Activated T-helper 2 cell treated with anti-CD3 and anti-CD28 coated beads, Interferon-gamma antibody, Interleukin-2, Interleukin-4, amounts not matched to agents 10 μg/mL and 5 μg/mL and 100 μg/mL, durations not matched to agents 14 hours and 24 hours and 36 hours (primary cell): ENCODE measurements at regions of chr22 and their contacts with region 1.

Region 1: DNA sequence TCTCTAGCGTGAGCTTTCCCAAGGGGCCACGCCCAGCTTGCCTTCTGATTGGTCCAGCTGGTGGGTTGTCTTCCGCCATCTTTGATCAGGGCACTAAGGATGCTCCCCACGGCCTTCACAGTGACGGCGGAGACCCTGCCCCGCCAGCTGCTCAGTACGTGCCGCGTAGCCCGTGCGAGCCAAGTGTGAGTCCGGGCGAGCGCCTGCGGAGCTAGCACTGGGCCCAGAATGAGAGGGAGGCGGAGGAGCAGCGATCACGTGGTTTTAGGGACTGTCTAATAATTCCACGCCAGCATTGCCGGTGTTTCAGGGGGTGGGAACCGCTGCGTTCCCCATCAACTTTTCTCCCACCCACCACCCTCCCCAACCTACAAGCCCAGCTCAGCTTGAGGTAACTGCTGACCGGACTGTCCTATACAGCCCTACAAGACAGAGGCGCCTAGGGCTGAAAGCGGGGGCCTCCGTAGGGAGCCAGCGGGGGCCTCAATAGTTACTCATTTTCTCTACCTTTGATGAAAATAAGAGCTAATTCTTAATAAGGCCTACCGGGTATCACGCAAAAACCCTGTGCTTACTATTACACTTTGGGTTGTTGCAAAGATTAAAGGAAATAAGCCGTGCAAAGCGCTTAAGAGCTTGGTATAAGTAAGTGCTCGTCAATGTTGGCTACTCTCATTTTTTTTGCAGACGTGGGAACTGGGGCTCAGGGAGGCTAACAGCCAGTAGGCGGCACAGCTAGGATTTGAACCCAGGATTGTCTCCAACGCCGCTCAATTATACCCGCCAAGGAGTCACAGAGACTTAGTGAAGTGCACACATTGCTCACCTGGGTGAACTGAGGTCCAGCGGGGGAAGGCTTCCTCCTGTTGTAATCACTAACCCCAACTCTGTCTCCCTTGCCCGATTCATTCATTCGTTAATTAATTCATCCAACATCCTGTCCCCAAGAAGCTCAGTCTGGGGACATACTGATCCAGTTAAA is 1.3 kb upstream of the MTFP1 start:
- DNase-seq: peak; percentile 98
- H3K4me3 Mint-ChIP-seq: peak overlapping the region; percentile 95
- H3K27ac Mint-ChIP-seq: peak overlapping the region; percentile 99
- H3K4me1 Mint-ChIP-seq: peaks cover 57% of the 10 kb centered on the region
- H3K27me3 Mint-ChIP-seq: no peaks in the 10 kb centered on the region

Region 2: GRCh38 chr22:29837780-29838598 is 586.3 kb before region 1 on chr22 and contains the start of gene ASCC2:
- intact Hi-C with region 1: loop called (anchors 10 kb)
- DNase-seq: peak; percentile 99
- H3K4me3 Mint-ChIP-seq: peak within 1 kb of the TSS; percentile 91
- H3K27ac Mint-ChIP-seq: peak within 1 kb of the TSS; percentile 84
- H3K4me1 Mint-ChIP-seq: peaks cover 26% of the 10 kb centered on the region
- H3K27me3 Mint-ChIP-seq: no peaks in the 10 kb centered on the region
- total RNA-seq, gene ASCC2: 69.8 and 74.9 TPM in 2 replicates

Region 3: GRCh38 chr22:30289134-30289979 is 134.9 kb before region 1 on chr22 and contains the start of gene CASTOR1:
- intact Hi-C with region 1: loop called (anchors 1 kb)
- DNase-seq: peak; percentile 92
- H3K4me3 Mint-ChIP-seq: peak within 1 kb of the TSS; percentile 87
- H3K27ac Mint-ChIP-seq: peak within 1 kb of the TSS; percentile 80
- H3K4me1 Mint-ChIP-seq: peaks cover 35% of the 10 kb centered on the region
- H3K27me3 Mint-ChIP-seq: no peaks in the 10 kb centered on the region
- total RNA-seq, gene CASTOR1: 11.1 TPM in 2 replicates

Region 4: GRCh38 chr22:30314915-30315314 is 109.4 kb before region 1 on chr22:
- intact Hi-C with region 1: no loop called
- DNase-seq: no peak
- H3K4me3 Mint-ChIP-seq: no peak overlapping the region
- H3K27ac Mint-ChIP-seq: peak overlapping the region; percentile 75
- H3K4me1 Mint-ChIP-seq: peaks cover 90% of the 10 kb centered on the region
- H3K27me3 Mint-ChIP-seq: no peaks in the 10 kb centered on the region

Region 5: GRCh38 chr22:30356449-30357235 is 67.6 kb before region 1 on chr22 and contains the starts of genes CCDC157 and SF3A1:
- intact Hi-C with region 1: loop called (anchors 2 kb)
- DNase-seq: peak; percentile 86
- H3K4me3 Mint-ChIP-seq: peak within 1 kb of the TSS; percentile 91
- H3K27ac Mint-ChIP-seq: peak within 1 kb of the TSS; percentile 89
- H3K4me1 Mint-ChIP-seq: peaks cover 34% of the 10 kb centered on the region
- H3K27me3 Mint-ChIP-seq: peaks cover 2% of the 10 kb centered on the region
- total RNA-seq, gene CCDC157: 3.2 and 4.3 TPM in 2 replicates
- total RNA-seq, gene SF3A1: 287 and 325 TPM in 2 replicates

Region 6: DNA sequence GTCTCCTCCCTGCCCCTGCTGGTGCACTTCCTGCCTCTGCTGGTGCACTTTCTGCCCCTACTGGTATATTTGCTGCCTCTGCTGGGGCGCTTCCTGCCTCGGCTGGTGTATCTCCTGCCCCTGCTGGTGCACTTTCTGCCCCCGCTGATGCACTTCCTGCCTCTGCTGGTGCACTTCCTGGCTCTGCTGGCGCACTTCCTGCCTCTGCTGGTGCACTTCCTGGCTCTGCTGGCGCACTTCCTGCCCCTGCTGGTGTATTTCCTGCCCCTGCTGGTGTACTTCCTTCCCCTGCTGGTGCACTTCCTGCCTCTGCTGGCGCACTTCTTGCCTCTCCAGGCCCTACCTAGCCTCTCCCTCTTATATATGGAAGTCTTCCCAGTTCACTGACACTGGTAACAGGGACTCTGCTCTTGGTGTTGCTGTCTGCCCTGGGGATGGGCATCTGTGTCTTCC is 11.4 kb after region 1 on chr22:
- intact Hi-C with region 1: loop called (anchors 1 kb)
- DNase-seq: peak; percentile 71
- H3K4me3 Mint-ChIP-seq: peak overlapping the region; percentile 76
- H3K27ac Mint-ChIP-seq: peak overlapping the region; percentile 95
- H3K4me1 Mint-ChIP-seq: peaks cover 20% of the 10 kb centered on the region
- H3K27me3 Mint-ChIP-seq: peaks cover 12% of the 10 kb centered on the region

Region 7: GRCh38 chr22:31290494-31291471 is 866.5 kb after region 1 on chr22:
- intact Hi-C with region 1: loop called (anchors 10 kb)
- DNase-seq: peak; percentile 92
- H3K4me3 Mint-ChIP-seq: peak overlapping the region; percentile 97
- H3K27ac Mint-ChIP-seq: peak overlapping the region; percentile 100
- H3K4me1 Mint-ChIP-seq: peaks cover 65% of the 10 kb centered on the region
- H3K27me3 Mint-ChIP-seq: no peaks in the 10 kb centered on the region